SK-N-SH (cell line): ENCODE measurements at regions of chr2 and their contacts with region 1.

Region 1: DNA sequence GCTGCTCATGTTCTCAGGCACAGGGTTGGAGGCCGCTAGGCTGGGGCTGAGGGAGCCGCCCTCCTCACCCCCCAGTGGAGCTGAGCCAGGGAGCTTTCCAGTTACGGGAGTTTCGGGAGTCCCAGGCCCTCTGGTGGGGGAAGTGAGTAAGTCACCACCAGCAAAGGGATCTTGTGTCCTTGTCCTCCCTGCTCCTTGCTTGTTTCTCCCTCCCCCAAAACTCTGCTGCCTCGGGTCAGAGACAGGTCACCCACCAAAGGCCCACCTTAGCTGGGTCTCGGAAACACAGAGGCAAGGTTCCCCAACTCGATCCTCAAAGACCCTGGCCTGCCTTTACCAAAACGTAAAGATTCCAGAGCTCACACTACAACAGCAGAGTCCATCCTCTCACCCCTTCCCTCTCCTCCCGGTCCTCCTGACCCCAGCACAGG is 60.5 kb upstream of the POMC start:
- DNase-seq: peak; percentile 98
- H3K4me3 ChIP-seq: no peak overlapping the region; a peak in 1 of 4 replicates
- H3K27ac ChIP-seq: peak overlapping the region in 1 of 2 experiments; percentile 68; a peak in 2 of 4 replicates
- H3K4me1 ChIP-seq: peaks cover 3 to 37% of the 10 kb centered on the region in 2 experiments; a peak in 2 of 4 replicates
- H3K27me3 ChIP-seq: no peaks in the 10 kb centered on the region
- CTCF ChIP-seq: peak; percentile 84
- EP300 ChIP-seq: no peak
- RAD21 ChIP-seq: peak; percentile 72

Region 2: GRCh38 chr2:25165992-25166875 is 62.6 kb before region 1 on chr2:
- CTCF ChIA-PET with region 1: interaction called, 34 read pairs
- POLR2A ChIA-PET with region 1: no interaction called
- DNase-seq: peak; percentile 73
- H3K4me3 ChIP-seq: no peak overlapping the region
- H3K27ac ChIP-seq: no peak overlapping the region
- H3K4me1 ChIP-seq: peaks cover 0 to 8% of the 10 kb centered on the region in 2 experiments; a peak in 1 of 4 replicates
- H3K27me3 ChIP-seq: peaks cover 42% of the 10 kb centered on the region
- CTCF ChIP-seq: peak; percentile 41
- EP300 ChIP-seq: no peak
- RAD21 ChIP-seq: peak; percentile 79

Region 3: DNA sequence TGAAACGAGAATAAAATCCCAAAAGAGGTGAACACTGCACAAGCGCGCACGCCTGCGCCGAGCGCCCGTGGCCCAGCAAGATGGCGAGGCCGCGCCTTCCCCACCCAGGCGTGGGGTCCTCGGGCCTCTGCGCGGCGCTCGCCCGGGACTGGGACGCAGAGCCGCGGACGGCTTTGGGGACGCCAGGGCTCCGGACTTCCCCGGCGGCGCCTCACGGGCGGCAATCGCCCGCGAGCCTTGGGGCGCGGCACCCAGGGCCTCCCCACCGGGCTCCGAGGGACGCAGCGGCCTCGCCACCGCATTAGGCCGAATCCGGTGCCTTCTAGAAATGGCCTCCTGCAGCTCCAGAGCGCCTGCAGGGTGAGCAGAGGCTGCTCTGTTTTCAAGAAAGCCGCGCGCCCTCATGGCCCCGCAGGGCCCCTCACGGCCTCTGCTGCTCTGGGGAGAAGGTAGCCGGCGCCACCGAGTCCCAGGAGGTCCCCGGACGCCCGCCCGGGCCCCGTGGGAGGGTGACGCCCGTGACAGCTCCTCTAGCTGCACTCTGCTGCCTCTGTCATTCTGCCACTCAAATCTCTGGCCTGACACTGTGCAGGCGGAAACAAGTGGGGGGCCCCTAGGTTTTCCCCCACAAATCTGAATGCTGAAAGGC is 24.5 kb before region 1 on chr2:
- CTCF ChIA-PET with region 1: interaction called, 20 read pairs
- POLR2A ChIA-PET with region 1: no interaction called
- DNase-seq: no peak
- H3K4me3 ChIP-seq: no peak overlapping the region
- H3K27ac ChIP-seq: no peak overlapping the region
- H3K4me1 ChIP-seq: no peaks in the 10 kb centered on the region
- H3K27me3 ChIP-seq: no peaks in the 10 kb centered on the region
- CTCF ChIP-seq: no peak
- EP300 ChIP-seq: no peak
- RAD21 ChIP-seq: no peak

Region 4: GRCh38 chr2:25246558-25247290 is 17.9 kb after region 1 on chr2:
- CTCF ChIA-PET with region 1: interaction called, 94 read pairs
- POLR2A ChIA-PET with region 1: interaction called, 6 read pairs
- DNase-seq: no peak
- H3K4me3 ChIP-seq: no peak overlapping the region
- H3K27ac ChIP-seq: no peak overlapping the region; a peak in 1 of 4 replicates
- H3K4me1 ChIP-seq: peaks cover 6 to 25% of the 10 kb centered on the region in 2 experiments; a peak in 3 of 4 replicates
- H3K27me3 ChIP-seq: no peaks in the 10 kb centered on the region
- CTCF ChIP-seq: no peak
- EP300 ChIP-seq: no peak
- RAD21 ChIP-seq: no peak

Region 5: GRCh38 chr2:25309402-25309801 is 80.5 kb after region 1 on chr2:
- CTCF ChIA-PET with region 1: interaction called, 23 read pairs
- POLR2A ChIA-PET with region 1: no interaction called
- DNase-seq: peak; percentile 85
- H3K4me3 ChIP-seq: no peak overlapping the region; a peak in 1 of 4 replicates
- H3K27ac ChIP-seq: peak overlapping the region in 1 of 2 experiments; percentile 53; a peak in 1 of 4 replicates
- H3K4me1 ChIP-seq: peaks cover 13 to 99% of the 10 kb centered on the region in 2 experiments; a peak in 3 of 4 replicates
- H3K27me3 ChIP-seq: no peaks in the 10 kb centered on the region
- CTCF ChIP-seq: peak; percentile 66
- EP300 ChIP-seq: no peak
- RAD21 ChIP-seq: peak; percentile 74

Region 6: DNA sequence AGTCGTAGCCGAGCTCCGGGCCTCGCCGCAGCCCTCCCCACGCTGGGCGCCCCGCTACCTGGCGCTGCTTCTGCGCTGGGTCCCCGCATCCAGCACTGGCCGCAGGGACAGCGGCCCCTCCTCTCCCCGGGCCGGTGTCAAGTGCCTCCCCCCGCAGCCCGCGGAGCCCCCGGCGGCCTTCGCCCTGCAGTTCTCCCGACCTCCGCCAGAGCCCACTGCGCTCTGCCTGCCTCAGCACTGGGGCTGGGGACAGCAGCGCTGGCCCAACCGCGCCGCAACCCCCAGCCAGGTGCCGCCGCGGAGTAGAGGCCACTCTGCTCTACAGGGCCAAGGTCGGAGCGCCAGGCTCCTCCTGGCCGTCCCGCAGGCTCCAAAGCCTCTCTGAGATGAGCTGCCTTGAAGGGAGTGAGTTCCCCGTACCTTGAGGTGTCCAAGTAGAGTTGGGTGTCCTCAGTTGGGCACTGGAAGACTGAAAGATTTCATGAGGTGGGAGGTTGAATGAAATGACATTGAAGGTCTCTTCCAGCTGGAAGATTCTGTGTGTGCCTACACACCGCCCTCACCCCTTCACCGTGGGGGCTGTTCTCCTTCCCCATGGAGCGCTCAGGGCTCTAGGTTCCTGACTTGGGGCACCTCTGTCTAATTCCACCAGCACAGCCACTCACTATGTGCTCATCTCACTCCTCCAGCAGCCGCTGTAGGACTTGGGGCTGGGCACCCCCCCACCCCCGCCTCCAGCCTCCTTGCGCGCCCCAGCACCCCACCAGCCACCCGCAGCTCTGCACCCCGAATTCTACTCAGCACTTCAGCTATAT is 113.7 kb after region 1 on chr2:
- CTCF ChIA-PET with region 1: interaction called, 10 read pairs
- POLR2A ChIA-PET with region 1: interaction called, 5 read pairs
- DNase-seq: peak; percentile 99
- H3K4me3 ChIP-seq: peak overlapping the region; percentile 82 to 87
- H3K27ac ChIP-seq: peak overlapping the region in 1 of 2 experiments; percentile 93; a peak in 2 of 4 replicates
- H3K4me1 ChIP-seq: peaks cover 10 to 35% of the 10 kb centered on the region in 2 experiments; a peak in 2 of 4 replicates
- H3K27me3 ChIP-seq: no peaks in the 10 kb centered on the region
- CTCF ChIP-seq: peak; percentile 84
- EP300 ChIP-seq: peak in 1 of 2 experiments; percentile 38; a peak in 1 of 4 replicates
- RAD21 ChIP-seq: peak; percentile 83